ENCODE measurements at regions of chr15 and their contacts with region 1.

Region 1: DNA sequence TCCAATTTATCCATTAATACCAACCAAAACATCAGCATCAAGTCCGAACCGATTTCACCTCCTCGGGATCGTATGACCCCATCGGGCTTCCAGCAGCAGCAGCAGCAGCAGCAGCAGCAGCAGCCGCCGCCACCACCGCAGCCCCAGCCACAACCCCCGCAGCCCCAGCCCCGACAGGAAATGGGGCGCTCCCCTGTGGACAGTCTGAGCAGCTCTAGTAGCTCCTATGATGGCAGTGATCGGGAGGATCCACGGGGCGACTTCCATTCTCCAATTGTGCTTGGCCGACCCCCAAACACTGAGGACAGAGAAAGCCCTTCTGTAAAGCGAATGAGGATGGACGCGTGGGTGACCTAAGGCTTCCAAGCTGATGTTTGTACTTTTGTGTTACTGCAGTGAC is 20.8 kb downstream of the LYSMD4 start:
- DNase-seq: no peak
- ATAC-seq: no peak
- H3K4me3 ChIP-seq: no peak overlapping the region
- H3K27ac ChIP-seq: peak overlapping the region in 8 of 12 donors; percentile 54 to 85 (median 72)
- H3K4me1 ChIP-seq: peaks cover 19 to 92% (median 64%) of the 10 kb centered on the region in 12 donors
- H3K27me3 ChIP-seq: no peaks in the 10 kb centered on the region
- CTCF ChIP-seq: no peak
- POLR2A ChIP-seq: no peak

Region 2: GRCh38 chr15:99755692-99756409 is 43.4 kb after region 1 on chr15:
- intact Hi-C with region 1: loop called in 1 of 10 experiments (anchors 5 kb)
- DNase-seq: peak; percentile 45 to 60 (median 55)
- ATAC-seq: peak; percentile 73 to 91 (median 88)
- H3K4me3 ChIP-seq: no peak overlapping the region
- H3K27ac ChIP-seq: no peak overlapping the region
- H3K4me1 ChIP-seq: peaks cover 0 to 4% (median 0%) of the 10 kb centered on the region in 12 donors
- H3K27me3 ChIP-seq: no peaks in the 10 kb centered on the region
- CTCF ChIP-seq: peak; percentile 78 to 92 (median 88)
- POLR2A ChIP-seq: no peak